ENCODE measurements at regions of chr15 and their contacts with region 1.

Region 1: GRCh38 chr15:45780352-45780751 is 145.5 kb downstream of the SQOR start:
- DNase-seq: no peak
- ATAC-seq: no peak

Region 2: DNA sequence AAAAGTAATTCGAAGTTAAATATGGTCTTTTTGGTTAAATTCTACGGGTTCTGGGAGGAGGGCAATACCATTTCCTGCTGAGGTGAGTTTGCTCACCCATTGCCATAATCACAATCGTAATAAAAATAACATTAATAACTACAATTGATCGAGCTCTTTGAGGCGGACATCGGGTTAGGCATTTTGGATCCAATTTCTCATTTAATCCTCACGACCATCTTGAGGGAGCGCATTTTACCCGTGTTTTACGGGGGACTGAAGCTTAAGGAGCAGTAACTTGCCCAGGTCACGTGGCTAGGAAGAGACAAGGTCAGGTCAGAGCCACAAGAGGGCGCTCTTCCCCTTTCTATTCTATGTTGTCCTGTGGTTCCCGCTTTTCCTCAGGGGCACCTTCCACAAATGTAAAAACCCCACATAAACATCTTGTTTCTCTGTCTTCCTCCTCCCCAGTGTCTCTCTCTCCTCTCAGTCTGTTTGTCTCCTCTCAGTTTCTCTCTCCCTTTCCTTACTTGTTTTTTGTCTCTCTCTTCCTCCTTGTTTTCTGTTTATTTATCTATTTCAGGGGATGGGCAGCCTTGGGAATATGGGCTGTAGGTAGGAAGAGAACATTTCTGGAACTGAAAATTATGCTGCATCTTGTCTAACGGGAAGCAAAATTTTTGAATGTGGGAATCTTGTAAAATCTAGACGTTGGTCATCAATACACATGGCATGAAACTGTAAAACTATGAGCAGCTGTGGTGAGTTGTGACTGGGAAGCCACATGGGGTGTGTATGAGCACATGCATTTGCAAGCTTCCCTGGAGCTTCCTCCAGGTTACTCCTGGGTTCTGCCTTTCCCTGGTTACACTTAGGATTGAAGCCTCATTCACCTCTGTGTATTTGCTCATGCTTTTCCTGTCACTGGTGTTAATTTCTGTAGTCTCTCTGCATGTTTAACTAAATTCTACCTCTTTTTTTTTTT is 74.6 kb before region 1 on chr15:
- intact Hi-C with region 1: no loop called
- DNase-seq: peak; percentile 75
- ATAC-seq: peak; percentile 90 to 91

Region 3: DNA sequence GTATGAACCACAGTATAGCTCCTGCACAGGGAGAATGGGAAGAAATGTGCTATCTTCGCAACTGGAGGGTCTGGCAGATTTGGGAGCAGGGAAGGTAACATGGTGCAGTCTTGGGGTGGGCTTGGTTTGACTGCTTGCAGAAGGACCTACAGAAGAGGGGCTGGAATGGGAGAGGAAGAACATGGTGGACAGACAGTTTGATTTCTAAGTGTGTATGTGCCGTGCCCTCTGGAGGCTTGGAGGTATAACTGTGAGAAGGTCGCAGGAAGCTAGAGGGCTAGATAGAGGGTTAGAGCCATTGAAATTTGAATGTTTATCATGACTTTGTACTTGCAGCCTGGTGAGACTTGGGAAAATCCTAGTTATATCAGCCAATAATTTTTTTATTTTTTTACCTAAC is 23.7 kb after region 1 on chr15:
- intact Hi-C with region 1: loop called in 1 of 2 experiments (anchors 2 kb)
- DNase-seq: no peak
- ATAC-seq: no peak